IMR-90 (cell line): ENCODE measurements at regions of chr12 and their contacts with region 1.

Region 1: DNA sequence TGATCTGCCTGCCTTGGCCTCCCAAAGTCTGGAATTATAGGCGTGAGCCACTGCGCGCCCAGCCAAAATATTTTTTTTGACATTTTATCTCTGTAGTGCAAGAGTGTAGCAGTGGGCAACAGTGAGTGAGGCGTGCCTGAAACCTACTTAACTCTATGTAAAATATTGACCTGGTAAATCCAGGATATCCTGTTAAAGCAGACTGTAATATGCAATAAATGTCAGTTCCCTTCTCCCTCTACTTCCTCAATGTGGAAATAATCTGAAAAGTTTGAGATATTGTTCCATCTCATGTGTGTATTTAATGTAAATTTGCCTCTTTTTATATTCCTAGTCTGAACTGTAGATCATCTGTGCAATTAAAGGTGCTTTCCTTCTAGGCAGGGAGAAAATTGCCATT is 9.5 kb upstream of the CDK17 start:
- DNase-seq: no peak
- ATAC-seq: no peak
- H3K4me3 ChIP-seq: no peak overlapping the region
- H3K27ac ChIP-seq: no peak overlapping the region
- H3K4me1 ChIP-seq: no peaks in the 10 kb centered on the region
- H3K27me3 ChIP-seq: no peaks in the 10 kb centered on the region
- CTCF ChIP-seq: no peak
- POLR2A ChIP-seq: no peak
- RAD21 ChIP-seq: no peak

Region 2: DNA sequence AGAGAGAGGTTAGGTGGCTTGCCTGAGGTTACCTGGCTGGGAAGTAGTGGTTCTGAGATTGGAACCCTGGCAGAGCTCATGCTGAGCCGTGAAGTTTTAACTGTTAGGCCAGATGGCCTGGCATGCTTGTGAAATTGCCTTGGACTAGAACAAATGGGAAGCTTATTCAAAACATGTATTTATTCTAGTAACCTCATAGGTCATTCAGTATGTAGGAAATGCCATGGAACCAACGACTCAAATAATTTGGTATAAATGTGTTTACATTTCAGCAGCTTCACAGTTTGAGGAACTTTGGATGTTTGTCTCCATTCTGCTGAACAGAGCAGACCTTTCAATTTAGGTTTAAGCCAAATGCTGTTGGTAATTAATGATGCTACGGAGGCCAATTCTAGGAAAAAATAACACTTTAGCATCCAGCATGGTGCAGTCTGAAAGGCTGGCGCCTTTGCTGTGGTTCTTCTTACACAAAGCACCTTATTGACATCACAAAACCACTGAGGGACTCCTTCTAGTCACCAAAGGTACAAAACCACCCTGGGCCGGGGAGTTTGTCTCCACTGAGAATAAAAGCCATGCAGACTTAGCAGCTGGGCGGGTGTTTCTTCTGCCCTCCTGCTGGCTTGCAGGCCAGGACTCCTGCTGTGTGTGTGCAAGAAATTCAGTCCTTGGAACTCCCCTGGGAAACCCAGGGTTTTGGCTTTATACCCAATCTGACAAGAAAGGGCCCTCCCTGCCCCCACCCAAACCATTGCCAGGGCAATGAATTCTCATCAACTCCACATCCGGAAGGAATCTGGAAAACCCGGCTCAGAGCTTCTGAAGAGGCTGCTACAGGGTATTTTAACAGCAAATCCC is 151.4 kb before region 1 on chr12:
- CTCF ChIA-PET with region 1: no interaction called
- POLR2A ChIA-PET with region 1: no interaction called
- dilution Hi-C with region 1: no loop called
- in situ Hi-C with region 1: no loop called
- intact Hi-C with region 1: no loop called
- DNase-seq: peak; percentile 54
- ATAC-seq: peak; percentile 53
- H3K4me3 ChIP-seq: no peak overlapping the region
- H3K27ac ChIP-seq: peak overlapping the region; percentile 39; the same call in 1 of the 2 replicates
- H3K4me1 ChIP-seq: peaks cover 17% of the 10 kb centered on the region
- H3K27me3 ChIP-seq: no peaks in the 10 kb centered on the region
- CTCF ChIP-seq: no peak
- POLR2A ChIP-seq: no peak
- RAD21 ChIP-seq: no peak

Region 3: DNA sequence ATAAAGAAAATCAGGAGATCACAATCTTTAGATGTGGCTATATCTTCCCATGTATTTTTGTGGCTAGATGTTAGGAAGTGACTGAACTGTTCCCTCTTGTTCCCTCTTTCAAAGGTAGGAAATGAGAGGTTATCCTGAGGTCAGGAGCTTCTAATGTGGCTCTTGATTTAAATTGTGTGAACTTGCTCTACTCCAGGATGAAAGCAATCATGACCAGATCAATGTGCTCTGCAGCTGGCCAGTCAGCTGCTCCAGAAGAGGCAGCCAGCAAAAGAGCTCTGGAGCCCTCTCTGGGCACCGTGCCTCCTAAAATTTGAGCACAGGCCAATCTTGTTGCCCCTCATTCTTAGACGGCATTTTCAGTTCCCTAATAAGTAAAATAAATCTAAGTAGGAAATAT is 41.5 kb before region 1 on chr12:
- CTCF ChIA-PET with region 1: no interaction called
- POLR2A ChIA-PET with region 1: no interaction called
- dilution Hi-C with region 1: no loop called
- in situ Hi-C with region 1: no loop called
- intact Hi-C with region 1: no loop called
- DNase-seq: no peak
- ATAC-seq: no peak
- H3K4me3 ChIP-seq: no peak overlapping the region
- H3K27ac ChIP-seq: no peak overlapping the region
- H3K4me1 ChIP-seq: peaks cover 6% of the 10 kb centered on the region
- H3K27me3 ChIP-seq: no peaks in the 10 kb centered on the region
- CTCF ChIP-seq: no peak
- POLR2A ChIP-seq: no peak
- RAD21 ChIP-seq: no peak

Region 4: DNA sequence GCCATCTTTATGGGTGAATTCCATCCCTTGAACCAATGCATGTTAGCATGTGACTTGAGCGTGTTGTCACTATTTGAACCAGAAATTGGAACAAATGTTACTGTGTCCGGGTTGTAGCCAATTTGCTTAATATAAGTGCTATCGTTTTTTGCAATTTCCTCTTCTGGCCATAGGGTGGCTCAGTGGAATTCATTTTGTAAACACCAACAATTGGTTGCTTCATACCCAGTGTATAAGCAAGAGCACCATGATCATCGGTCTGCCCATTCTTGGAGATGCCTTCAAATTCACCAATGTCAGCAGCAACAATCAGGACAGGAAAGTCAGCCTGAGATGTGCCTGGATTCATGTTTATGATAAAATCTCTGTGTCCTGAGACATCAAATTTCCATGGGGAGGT is 492.3 kb after region 1 on chr12:
- CTCF ChIA-PET with region 1: no interaction called
- POLR2A ChIA-PET with region 1: no interaction called
- dilution Hi-C with region 1: no loop called
- in situ Hi-C with region 1: no loop called
- intact Hi-C with region 1: loop called (anchors 5 kb)
- DNase-seq: no peak
- ATAC-seq: no peak; the same call in 1 of the 2 replicates
- H3K4me3 ChIP-seq: no peak overlapping the region
- H3K27ac ChIP-seq: no peak overlapping the region
- H3K4me1 ChIP-seq: no peaks in the 10 kb centered on the region
- H3K27me3 ChIP-seq: peaks cover 10% of the 10 kb centered on the region
- CTCF ChIP-seq: 0 out of 2 replicates have a peak, but pooled peaks have one; percentile 10
- POLR2A ChIP-seq: no peak
- RAD21 ChIP-seq: no peak